ENCODE measurements at regions of chr15 and their contacts with region 1.

Region 1: GRCh38 chr15:81000624-81001151 is at the start of gene TLNRD1:
- DNase-seq: peak; percentile 95
- ATAC-seq: peak; percentile 84 to 92
- H3K4me3 ChIP-seq: peak within 1 kb of the TSS; percentile 67
- H3K27ac ChIP-seq: peak within 1 kb of the TSS; percentile 90 to 98
- H3K4me1 ChIP-seq: peaks cover 24% of the 10 kb centered on the region
- CTCF ChIP-seq: no peak
- EP300 ChIP-seq: no peak
- POLR2A ChIP-seq: peak; percentile 96
- RAD21 ChIP-seq: no peak
- polyA plus RNA-seq, gene TLNRD1: 5.3 and 6.6 TPM in 2 replicates

Region 2: DNA sequence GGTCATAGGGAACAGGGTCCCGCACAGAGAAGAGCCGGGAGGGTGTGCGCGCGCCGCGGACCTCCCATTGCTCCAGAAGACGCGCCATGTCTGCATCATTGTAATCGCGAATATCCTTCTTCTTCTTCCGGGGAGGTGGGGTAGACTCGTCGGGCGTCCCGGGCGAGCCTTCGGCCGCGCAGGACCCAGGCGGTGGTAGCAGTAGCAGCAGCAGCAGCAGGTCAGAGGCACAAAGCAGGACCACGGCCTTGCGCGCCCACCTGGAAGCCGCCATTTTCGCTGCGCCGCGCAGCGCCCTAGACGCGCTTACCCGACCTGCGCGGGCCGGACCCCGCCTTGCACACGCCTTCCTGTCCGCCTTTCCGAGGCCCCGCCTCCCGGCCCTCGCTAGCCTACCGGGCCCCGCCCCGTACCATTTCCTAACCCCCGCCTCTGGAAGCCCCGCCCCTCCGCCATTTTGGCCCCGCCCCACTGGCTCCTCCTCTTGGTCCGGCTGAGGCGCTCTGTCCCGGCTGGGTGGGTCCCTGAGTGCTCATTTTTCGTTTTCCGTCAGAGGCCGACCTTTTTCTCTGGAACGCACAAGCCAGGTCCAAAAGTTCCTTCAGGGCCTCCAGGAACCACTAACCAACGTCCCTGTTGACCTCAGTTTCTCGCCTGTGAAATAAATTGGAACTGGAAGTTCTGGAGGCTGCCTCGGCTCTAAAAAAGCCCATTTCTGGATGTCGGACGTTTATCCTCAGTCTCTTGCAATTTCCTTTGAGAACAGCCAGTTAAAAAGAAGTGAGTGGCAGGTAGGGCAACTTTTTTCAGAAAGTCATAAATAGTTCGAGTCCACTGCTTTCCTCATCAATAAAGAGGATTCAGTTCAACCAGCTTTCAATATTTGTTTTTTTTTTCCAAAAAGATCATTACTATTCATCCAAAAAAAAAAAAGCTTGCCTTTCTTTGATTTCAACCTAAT is 10.9 kb before region 1 on chr15 and contains the start of gene MESD:
- CTCF ChIA-PET with region 1: interaction called, 9 read pairs
- POLR2A ChIA-PET with region 1: interaction called, 30 read pairs
- DNase-seq: peak; percentile 97
- ATAC-seq: peak; percentile 95 to 99
- H3K4me3 ChIP-seq: peak within 1 kb of the TSS; percentile 78
- H3K27ac ChIP-seq: peak within 1 kb of the TSS; percentile 87 to 89
- H3K4me1 ChIP-seq: peaks cover 18% of the 10 kb centered on the region; the same call in 2 of the 3 replicates
- CTCF ChIP-seq: no peak
- EP300 ChIP-seq: no peak
- POLR2A ChIP-seq: peak; percentile 97
- RAD21 ChIP-seq: no peak
- polyA plus RNA-seq, gene MESD: 29.6 and 35.6 TPM in 2 replicates

Region 3: GRCh38 chr15:81029414-81030300 is 29.0 kb after region 1 on chr15:
- CTCF ChIA-PET with region 1: no interaction called
- POLR2A ChIA-PET with region 1: no interaction called
- DNase-seq: peak in 1 of 2 experiments; percentile 29
- ATAC-seq: no peak; a peak in 1 of 6 replicates
- H3K4me3 ChIP-seq: no peak overlapping the region
- H3K27ac ChIP-seq: peak overlapping the region in 1 of 2 experiments; percentile 38; a peak in 1 of 6 replicates
- H3K4me1 ChIP-seq: no peaks in the 10 kb centered on the region
- CTCF ChIP-seq: no peak
- EP300 ChIP-seq: no peak
- POLR2A ChIP-seq: no peak
- RAD21 ChIP-seq: no peak

Region 4: GRCh38 chr15:81296673-81297072 is 296.0 kb after region 1 on chr15:
- CTCF ChIA-PET with region 1: no interaction called
- POLR2A ChIA-PET with region 1: no interaction called
- DNase-seq: no peak
- ATAC-seq: no peak
- H3K4me3 ChIP-seq: no peak overlapping the region
- H3K27ac ChIP-seq: no peak overlapping the region
- H3K4me1 ChIP-seq: peaks cover 16% of the 10 kb centered on the region
- CTCF ChIP-seq: no peak
- EP300 ChIP-seq: no peak
- POLR2A ChIP-seq: no peak
- RAD21 ChIP-seq: no peak